ENCODE measurements at regions of chr1 and their contacts with region 1.

Region 1: DNA sequence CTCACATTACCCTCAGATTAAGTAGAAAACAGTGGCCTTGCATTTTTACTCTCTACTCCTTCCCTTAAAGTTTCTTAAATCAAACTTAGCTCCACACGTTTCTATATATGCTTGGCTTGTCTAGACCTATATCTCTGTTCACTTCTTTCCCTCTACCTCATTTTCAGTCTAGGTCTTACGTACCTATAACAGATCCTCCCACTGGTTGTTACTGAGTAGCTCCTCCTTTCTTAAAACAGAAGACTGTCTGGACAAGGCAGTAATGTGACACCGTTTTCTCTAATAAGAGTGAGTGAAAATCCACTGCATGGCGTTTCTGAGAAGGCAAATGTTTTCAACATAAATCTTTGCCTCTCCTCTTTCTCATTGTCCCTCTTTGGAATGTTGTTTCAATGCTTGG is 211.7 kb upstream of the POGK start:
- DNase-seq: no peak
- H3K4me3 ChIP-seq: no peak overlapping the region
- H3K27ac ChIP-seq: no peak overlapping the region
- H3K4me1 ChIP-seq: no peaks in the 10 kb centered on the region
- H3K27me3 ChIP-seq: no peaks in the 10 kb centered on the region
- CTCF ChIP-seq: no peak

Region 2: GRCh38 chr1:166588741-166589140 is 38.8 kb before region 1 on chr1:
- intact Hi-C with region 1: loop called (anchors 5 kb)
- DNase-seq: no peak
- H3K4me3 ChIP-seq: no peak overlapping the region
- H3K27ac ChIP-seq: no peak overlapping the region
- H3K4me1 ChIP-seq: no peaks in the 10 kb centered on the region
- H3K27me3 ChIP-seq: no peaks in the 10 kb centered on the region
- CTCF ChIP-seq: no peak

Region 3: DNA sequence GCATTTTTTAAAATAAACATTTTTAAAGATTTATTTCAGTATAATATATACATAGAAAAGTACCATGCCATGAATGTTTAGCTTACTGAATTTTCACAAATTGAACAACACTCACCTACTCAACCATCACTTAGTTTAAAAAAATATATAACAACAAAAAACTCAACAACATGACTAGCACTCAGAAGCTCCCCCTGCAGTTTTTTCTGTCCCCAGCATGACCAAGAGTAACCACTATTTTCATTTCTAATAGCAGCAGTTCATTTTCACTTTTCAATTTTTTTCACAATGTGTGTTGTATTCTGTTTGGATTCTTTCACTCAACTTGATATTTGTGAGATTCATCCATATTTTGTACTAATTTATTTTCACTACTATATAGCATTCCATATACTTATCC is 49.4 kb after region 1 on chr1:
- intact Hi-C with region 1: no loop called
- DNase-seq: no peak
- H3K4me3 ChIP-seq: no peak overlapping the region
- H3K27ac ChIP-seq: no peak overlapping the region
- H3K4me1 ChIP-seq: no peaks in the 10 kb centered on the region
- H3K27me3 ChIP-seq: no peaks in the 10 kb centered on the region
- CTCF ChIP-seq: no peak